Lower lobe of right lung (tissue), 2 donors: ENCODE measurements at regions of chr4 and their contacts with region 1.

Region 1: DNA sequence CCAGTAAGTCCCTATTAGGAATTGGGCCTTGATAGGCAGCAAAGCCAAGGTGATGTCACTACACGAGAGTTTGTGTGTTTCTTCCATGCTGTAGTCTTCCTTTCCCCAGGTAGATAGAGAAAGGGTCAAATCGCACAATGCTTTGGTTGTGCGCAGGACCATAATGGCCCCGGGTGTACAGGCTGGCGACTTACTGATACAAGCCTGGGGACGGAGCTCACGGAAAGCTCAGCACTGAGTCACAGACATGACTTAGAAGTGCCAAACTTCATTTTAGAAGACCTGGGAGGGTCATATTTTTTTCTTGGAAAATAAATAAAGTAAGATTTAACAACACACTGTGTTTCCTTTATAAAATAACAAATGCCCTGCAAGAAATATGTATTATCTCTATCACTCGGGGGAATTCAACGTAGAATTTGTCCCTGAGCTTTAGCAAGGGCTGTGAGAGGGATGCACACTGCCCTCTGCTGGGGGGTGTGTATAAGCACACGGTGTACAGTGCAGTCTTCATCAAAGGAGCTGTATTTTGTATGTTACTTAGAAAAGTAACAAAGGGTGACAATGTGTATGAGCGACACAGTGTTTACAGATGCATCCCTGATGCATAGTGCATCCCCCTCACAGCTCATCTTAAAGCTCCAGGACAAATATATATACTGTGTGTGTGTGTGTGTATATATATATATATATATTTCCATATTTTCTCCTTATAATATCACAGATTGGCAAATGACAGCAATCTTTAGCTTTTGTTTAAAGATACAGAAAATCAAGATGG is 254.5 kb upstream of the VEGFC start:
- DNase-seq: no peak
- ATAC-seq: peak; percentile 85 to 90
- H3K4me3 ChIP-seq: no peak overlapping the region
- H3K27ac ChIP-seq: no peak overlapping the region
- H3K4me1 ChIP-seq: no peaks in the 10 kb centered on the region
- H3K27me3 ChIP-seq: no peaks in the 10 kb centered on the region
- CTCF ChIP-seq: peak; percentile 80

Region 2: GRCh38 chr4:176377780-176378179 is 669.5 kb before region 1 on chr4:
- intact Hi-C with region 1: loop called (anchors 5 kb)
- DNase-seq: no peak
- ATAC-seq: no peak
- H3K4me3 ChIP-seq: no peak overlapping the region
- H3K27ac ChIP-seq: no peak overlapping the region
- H3K4me1 ChIP-seq: no peaks in the 10 kb centered on the region
- H3K27me3 ChIP-seq: no peaks in the 10 kb centered on the region
- CTCF ChIP-seq: peak; percentile 40

Region 3: GRCh38 chr4:176949029-176949428 is 98.2 kb before region 1 on chr4:
- intact Hi-C with region 1: no loop called
- DNase-seq: no peak
- ATAC-seq: peak; percentile 50 to 58
- H3K4me3 ChIP-seq: no peak overlapping the region
- H3K27ac ChIP-seq: no peak overlapping the region
- H3K4me1 ChIP-seq: no peaks in the 10 kb centered on the region
- H3K27me3 ChIP-seq: no peaks in the 10 kb centered on the region
- CTCF ChIP-seq: no peak